Tibial artery (tissue), 4 donors: ENCODE measurements at regions of chr19 and their contacts with region 1.

Region 1: GRCh38 chr19:4456843-4457653 is 546 bp downstream of the UBXN6 start:
- DNase-seq: no peak
- H3K4me3 ChIP-seq: peak overlapping the region; percentile 79 to 94
- H3K27ac ChIP-seq: peak overlapping the region; percentile 85 to 89
- H3K4me1 ChIP-seq: peaks cover 0 to 27% (median 24%) of the 10 kb centered on the region in 4 donors
- H3K27me3 ChIP-seq: no peaks in the 10 kb centered on the region
- CTCF ChIP-seq: no peak

Region 2: DNA sequence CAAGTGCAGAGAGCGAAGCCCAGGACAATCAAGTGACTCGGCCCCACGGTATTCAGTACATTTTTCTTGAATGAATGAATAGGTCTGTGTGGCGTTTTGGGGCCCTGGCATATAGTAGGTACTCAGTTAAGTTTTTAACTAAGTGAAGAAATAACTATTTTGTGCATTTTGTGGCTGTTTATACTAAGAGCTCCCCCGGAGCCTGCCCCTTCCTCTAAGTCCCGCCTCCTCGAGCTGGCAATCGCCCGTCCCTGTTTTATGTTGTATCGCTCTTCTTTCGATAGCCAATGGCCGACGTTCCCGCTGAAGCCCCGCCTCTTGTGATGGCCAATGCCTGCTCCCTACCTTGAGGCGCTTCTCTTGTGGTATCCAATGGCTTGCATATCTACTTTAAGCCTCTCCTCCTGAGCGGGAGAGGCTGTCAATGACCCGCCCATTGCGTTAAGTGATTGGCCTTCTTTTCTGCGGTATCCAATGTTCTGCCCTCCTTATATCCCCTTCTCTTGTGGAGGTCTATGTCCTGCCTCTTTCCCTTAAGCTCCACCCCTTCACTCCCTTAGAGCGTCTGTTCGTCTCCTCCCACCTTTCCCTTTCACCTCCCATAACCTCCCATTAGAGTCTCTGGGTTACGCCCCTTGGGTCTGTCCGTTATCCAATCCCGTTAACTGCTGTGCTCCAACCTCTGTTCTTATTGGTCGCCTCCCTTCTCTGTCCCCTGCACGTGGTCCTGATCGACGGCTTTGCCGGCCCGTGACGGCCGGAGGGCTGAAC is 14.5 kb after region 1 on chr19:
- intact Hi-C with region 1: loop called (anchors 1 kb)
- DNase-seq: peak; percentile 99
- H3K4me3 ChIP-seq: peak overlapping the region; percentile 97 to 98
- H3K27ac ChIP-seq: peak overlapping the region; percentile 74 to 83
- H3K4me1 ChIP-seq: peaks cover 0 to 31% (median 25%) of the 10 kb centered on the region in 4 donors
- H3K27me3 ChIP-seq: no peaks in the 10 kb centered on the region
- CTCF ChIP-seq: peak in 1 of 2 experiments; percentile 32

Region 3: DNA sequence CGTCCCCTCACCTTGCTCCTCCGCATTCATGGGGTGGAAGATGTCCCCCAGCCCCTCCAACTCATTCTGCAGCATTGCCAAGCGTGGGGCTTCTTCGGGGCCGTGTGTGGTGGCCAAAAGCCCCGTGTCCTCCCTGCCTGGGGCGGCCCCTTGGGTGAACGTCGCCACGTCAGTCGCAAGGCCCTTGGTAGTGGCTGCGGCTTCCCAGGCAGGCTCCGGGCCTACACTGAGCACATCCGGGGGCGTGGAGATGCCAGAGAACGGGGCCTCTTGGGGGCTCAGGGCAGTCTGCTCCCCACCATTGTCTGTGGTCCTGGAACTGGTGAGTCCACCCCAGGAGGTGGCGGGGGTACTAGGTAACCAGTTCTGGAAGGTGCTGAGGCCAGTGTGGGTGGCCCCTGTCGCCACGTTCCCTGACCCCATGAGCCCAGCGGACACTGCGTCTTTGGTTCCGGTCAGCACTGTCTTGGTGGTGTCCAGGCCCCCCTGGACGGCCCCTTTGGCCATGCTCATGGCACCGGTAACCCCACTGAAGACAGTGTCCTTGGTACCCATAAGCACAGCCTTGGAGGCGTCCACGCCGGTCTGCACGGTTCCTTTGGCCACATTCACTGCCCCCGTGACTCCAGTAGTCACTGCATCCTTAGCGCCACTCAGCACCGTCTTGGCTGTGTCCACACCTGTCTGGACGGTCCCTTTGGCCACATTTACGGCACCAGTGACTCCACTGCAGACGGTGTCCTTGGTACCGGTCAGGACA is 53.6 kb after region 1 on chr19:
- intact Hi-C with region 1: no loop called
- DNase-seq: no peak
- H3K4me3 ChIP-seq: no peak overlapping the region
- H3K27ac ChIP-seq: no peak overlapping the region
- H3K4me1 ChIP-seq: no peaks in the 10 kb centered on the region
- H3K27me3 ChIP-seq: peaks cover 0 to 2% of the 10 kb centered on the region in 2 donors
- CTCF ChIP-seq: no peak